Activated CD4-positive, alpha-beta T cell treated with anti-CD3 and anti-CD28 coated beads, Interleukin-2, amount 10 ng/mL, durations not matched to agents 24 days and 14 days (primary cell): ENCODE measurements at regions of chr11 and their contacts with region 1.

Region 1: GRCh38 chr11:58654079-58654907 is 31.8 kb downstream of the CNTF start:
- DNase-seq: peak; percentile 91
- H3K4me3 Mint-ChIP-seq: no peak overlapping the region
- H3K27ac Mint-ChIP-seq: no peak overlapping the region
- H3K4me1 Mint-ChIP-seq: peaks cover 7% of the 10 kb centered on the region
- H3K27me3 Mint-ChIP-seq: peaks cover 4% of the 10 kb centered on the region

Region 2: DNA sequence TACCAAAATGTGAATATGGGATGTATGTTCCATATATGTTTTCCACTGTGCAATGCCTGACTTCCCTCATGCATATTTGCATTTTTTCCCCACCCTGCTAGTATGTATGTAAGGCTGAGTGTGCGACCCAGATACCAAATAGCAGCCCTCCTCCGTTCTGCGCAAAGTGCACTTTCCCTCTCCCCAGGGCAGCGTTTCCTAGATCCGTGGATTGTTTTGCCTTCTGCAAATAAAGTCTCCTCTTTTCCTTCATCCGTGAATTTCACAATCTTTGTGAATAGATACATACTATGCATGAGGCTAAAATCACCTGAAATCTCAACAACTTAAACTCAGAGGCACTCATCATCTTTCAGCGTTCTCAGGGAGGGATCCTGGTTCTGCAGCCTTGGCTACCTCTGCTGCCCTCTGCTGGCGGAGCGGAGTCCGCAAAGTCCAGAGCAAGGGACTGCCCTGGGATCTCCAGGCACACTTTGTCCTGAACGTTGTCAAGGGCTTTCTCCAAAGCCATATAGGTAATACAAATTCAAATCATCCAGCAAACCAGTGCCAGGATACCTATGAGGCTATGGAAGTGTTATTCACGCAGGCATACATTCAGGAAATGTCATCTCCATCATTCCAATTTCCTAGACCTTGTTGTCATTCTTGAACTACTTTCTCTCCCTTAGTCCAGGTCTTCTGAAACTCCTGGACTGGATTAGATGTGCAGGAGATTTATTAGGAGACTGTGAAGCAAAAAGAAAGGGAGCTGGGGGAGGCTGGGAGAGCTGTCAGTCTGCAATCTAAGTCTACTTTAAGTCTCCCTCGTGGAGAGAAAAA is 21.3 kb after region 1 on chr11:
- intact Hi-C with region 1: loop called (anchors 2 kb)
- DNase-seq: peak; percentile 91
- H3K4me3 Mint-ChIP-seq: no peak overlapping the region
- H3K27ac Mint-ChIP-seq: no peak overlapping the region
- H3K4me1 Mint-ChIP-seq: no peaks in the 10 kb centered on the region
- H3K27me3 Mint-ChIP-seq: peaks cover 7% of the 10 kb centered on the region

Region 3: GRCh38 chr11:58788355-58789023 is 134.2 kb after region 1 on chr11:
- intact Hi-C with region 1: loop called (anchors 1 kb)
- DNase-seq: peak; percentile 82
- H3K4me3 Mint-ChIP-seq: no peak overlapping the region
- H3K27ac Mint-ChIP-seq: no peak overlapping the region
- H3K4me1 Mint-ChIP-seq: no peaks in the 10 kb centered on the region
- H3K27me3 Mint-ChIP-seq: peaks cover 2% of the 10 kb centered on the region

Region 4: GRCh38 chr11:58900479-58901420 is 246.5 kb after region 1 on chr11:
- intact Hi-C with region 1: loop called (anchors 5 kb)
- DNase-seq: peak; percentile 82
- H3K4me3 Mint-ChIP-seq: no peak overlapping the region
- H3K27ac Mint-ChIP-seq: no peak overlapping the region
- H3K4me1 Mint-ChIP-seq: no peaks in the 10 kb centered on the region
- H3K27me3 Mint-ChIP-seq: peaks cover 37% of the 10 kb centered on the region

Region 5: DNA sequence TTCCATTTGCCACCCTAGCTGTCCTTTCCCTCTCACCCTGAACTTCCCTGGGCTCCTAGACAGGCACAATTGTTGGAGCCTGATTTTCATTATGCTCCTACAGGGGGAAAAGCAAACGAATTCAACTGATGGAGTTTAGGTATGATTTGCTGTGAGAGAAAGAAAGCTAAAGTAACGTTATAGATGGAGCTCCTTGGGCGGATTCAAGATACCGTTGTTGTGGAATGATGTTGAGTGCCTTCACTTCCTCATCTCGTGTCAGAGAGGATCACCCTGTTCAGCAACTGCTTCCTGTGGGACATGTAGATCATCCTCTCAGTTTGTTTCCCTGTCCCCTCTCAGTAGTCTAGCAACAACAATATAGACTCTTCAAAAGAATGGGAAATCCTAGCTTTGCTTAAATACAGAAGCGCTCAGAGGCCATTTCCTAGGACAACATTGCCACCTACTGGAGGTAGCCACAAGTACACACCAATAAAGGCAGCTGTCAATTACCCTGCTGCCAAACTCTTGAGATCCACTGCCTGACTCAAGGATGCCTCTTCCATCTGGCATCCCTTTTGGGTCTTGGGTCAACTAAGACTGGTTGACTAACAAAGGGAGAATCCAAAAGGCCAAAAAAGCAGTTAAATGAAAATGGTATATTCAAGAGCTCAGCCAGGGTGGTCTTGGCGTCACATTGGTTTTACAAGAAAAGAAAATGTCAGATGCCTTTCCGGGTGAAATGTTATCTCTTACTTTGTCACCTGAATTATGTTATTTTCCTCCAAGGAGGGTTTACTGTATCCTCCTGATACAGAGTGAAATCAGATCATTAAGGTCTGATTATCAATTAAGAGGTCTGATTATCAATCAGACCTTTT is 504.1 kb after region 1 on chr11:
- intact Hi-C with region 1: loop called (anchors 5 kb)
- DNase-seq: peak; percentile 90
- H3K4me3 Mint-ChIP-seq: no peak overlapping the region
- H3K27ac Mint-ChIP-seq: no peak overlapping the region
- H3K4me1 Mint-ChIP-seq: peaks cover 7% of the 10 kb centered on the region
- H3K27me3 Mint-ChIP-seq: peaks cover 15% of the 10 kb centered on the region